GM18951 (cell line): ENCODE measurements at regions of chr20 and their contacts with region 1.

Region 1: DNA sequence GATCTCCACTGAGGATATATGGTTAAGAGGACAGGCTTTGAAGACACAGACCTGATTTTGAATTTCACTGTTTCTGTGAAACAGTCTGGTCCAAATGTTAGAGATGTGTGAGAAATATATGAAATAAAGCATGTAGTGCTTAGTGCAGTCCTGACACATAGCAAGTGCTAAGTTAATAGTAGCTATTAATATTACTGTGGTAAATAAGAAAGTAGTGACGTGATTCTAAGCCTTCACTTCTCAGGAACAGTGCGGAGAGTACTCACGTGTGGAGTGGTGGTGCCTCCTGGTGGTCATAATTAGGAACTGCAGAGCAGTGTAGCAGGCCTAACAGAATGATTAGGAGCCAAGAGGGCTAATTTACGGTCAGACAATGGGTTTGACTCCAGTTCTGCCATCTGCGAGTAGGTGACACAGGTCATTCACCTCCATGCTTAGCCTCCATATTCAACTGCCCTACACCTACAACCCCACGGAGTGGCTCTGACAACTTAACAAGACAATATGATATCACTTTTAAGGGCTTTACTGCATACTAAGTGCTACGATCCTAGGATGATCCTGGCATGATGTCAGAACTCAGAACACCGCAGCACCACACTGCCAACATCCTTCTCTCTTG is 106.2 kb downstream of the JPH2 start:
- POLR2A ChIP-seq: no peak

Region 2: GRCh38 chr20:43448748-43449535 is 631.8 kb before region 1 on chr20:
- in situ Hi-C with region 1: loop called (anchors 10 kb)
- POLR2A ChIP-seq: no peak

Region 3: GRCh38 chr20:43537921-43538877 is 542.6 kb before region 1 on chr20:
- in situ Hi-C with region 1: loop called (anchors 25 kb)
- POLR2A ChIP-seq: no peak

Region 4: GRCh38 chr20:43736588-43737158 is 344.1 kb before region 1 on chr20:
- in situ Hi-C with region 1: loop called (anchors 5 kb)
- POLR2A ChIP-seq: no peak